PC-3 (cell line): ENCODE measurements at regions of chr7 and their contacts with region 1.

Region 1: GRCh38 chr7:29564496-29565223 is 1.0 kb downstream of the PRR15 start:
- DNase-seq: peak; percentile 92
- ATAC-seq: peak; percentile 57
- H3K4me3 ChIP-seq: peak overlapping the region; percentile 83
- H3K27ac ChIP-seq: peak overlapping the region; percentile 82
- H3K4me1 ChIP-seq: peaks cover 23% of the 10 kb centered on the region
- H3K27me3 ChIP-seq: no peaks in the 10 kb centered on the region
- CTCF ChIP-seq: no peak

Region 2: GRCh38 chr7:29163854-29164253 is 400.8 kb before region 1 on chr7:
- CTCF ChIA-PET with region 1: no interaction called
- POLR2A ChIA-PET with region 1: interaction called, 18 read pairs
- intact Hi-C with region 1: no loop called
- DNase-seq: peak; percentile 32
- ATAC-seq: peak; percentile 98
- H3K4me3 ChIP-seq: no peak overlapping the region
- H3K27ac ChIP-seq: no peak overlapping the region
- H3K4me1 ChIP-seq: no peaks in the 10 kb centered on the region
- H3K27me3 ChIP-seq: no peaks in the 10 kb centered on the region
- CTCF ChIP-seq: no peak

Region 3: GRCh38 chr7:29372351-29373090 is 192.1 kb before region 1 on chr7:
- CTCF ChIA-PET with region 1: no interaction called
- POLR2A ChIA-PET with region 1: interaction called, 10 read pairs
- intact Hi-C with region 1: no loop called
- DNase-seq: peak; percentile 64
- ATAC-seq: peak; percentile 42
- H3K4me3 ChIP-seq: no peak overlapping the region
- H3K27ac ChIP-seq: peak overlapping the region; percentile 88
- H3K4me1 ChIP-seq: peaks cover 49% of the 10 kb centered on the region
- H3K27me3 ChIP-seq: no peaks in the 10 kb centered on the region
- CTCF ChIP-seq: no peak

Region 4: DNA sequence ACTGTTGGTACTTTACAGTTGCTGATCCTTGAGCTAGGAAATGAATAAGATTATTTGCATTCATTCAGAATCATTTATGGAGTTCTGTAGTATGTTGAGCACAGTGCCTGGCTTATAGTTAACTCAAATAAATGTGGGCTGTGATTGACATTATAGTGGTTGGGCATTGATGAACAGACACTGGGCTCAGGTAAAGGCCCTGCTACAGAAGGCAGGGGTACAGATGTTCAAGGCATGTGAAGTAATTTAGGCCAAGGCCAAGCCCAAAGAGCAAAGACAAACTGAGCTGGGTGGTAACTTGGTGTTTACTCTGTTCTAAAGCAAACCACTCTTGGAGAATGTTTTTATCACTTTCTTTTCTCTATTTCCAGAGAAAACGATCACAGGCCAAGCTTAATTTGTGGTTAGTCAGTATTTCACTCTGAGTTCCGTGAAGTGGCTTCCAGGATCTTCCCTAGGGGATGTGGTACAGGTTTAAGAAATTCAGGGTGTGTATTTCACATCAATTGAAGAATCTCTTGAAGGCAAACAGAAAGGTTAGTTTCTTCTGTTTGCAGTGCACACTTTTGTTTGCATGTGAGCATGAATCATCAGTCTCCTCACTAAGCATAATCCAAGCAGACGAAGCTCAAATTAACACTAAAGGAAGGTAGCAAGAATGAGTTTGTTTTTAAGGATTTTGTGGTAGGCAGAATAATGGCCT is 114.9 kb before region 1 on chr7:
- CTCF ChIA-PET with region 1: no interaction called
- POLR2A ChIA-PET with region 1: no interaction called
- intact Hi-C with region 1: loop called (anchors 1 kb)
- DNase-seq: peak; percentile 81
- ATAC-seq: peak; percentile 95
- H3K4me3 ChIP-seq: no peak overlapping the region; the same call in 1 of the 2 replicates
- H3K27ac ChIP-seq: peak overlapping the region; percentile 71
- H3K4me1 ChIP-seq: peaks cover 32% of the 10 kb centered on the region
- H3K27me3 ChIP-seq: no peaks in the 10 kb centered on the region
- CTCF ChIP-seq: no peak

Region 5: DNA sequence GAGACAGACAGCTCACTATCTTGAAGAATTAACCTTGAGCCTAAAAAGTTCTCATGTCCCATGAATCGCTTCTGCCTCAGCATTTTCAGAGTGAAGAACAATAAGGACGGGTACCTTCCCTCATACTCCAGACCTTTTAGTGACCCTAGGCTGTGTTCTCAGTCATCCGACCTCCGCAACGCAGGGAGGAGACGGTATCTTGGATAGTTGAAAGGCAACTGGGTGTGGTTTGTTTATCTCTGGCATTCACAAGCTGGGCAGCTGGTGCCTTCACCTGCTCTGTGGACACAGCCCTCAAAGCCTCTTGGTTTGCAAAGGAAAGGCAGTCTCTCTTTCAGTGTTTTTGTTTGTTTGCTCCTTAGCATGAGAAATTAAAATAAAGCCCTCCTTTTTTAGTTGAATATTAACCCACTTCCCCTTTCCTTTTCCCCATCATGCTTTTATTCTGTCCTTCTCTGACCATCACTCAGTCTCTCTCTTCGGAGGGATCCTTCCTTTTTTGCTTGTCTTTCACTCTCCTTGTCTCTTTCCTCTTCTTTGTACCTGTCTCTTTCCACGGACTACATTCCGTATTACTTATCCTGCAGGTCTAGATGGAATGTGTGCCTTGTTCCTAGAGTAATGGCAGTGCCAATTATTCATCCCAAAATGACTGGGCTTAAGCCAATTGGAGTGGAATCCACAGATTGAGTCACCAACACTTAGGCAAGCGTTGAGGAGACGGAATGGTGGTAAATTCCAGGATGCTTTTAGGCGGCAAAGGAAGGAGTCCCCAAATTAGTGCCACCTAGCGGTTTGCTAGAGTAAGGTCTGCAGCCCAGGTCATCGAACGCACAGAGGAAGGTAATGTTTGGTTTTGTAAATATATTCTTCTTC is 44.7 kb after region 1 on chr7:
- CTCF ChIA-PET with region 1: interaction called, 3 read pairs
- POLR2A ChIA-PET with region 1: interaction called, 3 read pairs
- intact Hi-C with region 1: loop called (anchors 1 kb)
- DNase-seq: peak; percentile 88
- ATAC-seq: peak; percentile 8
- H3K4me3 ChIP-seq: peak overlapping the region; percentile 29; the same call in 1 of the 2 replicates
- H3K27ac ChIP-seq: peak overlapping the region; percentile 94
- H3K4me1 ChIP-seq: peaks cover 75% of the 10 kb centered on the region
- H3K27me3 ChIP-seq: no peaks in the 10 kb centered on the region
- CTCF ChIP-seq: peak; percentile 87

Region 6: DNA sequence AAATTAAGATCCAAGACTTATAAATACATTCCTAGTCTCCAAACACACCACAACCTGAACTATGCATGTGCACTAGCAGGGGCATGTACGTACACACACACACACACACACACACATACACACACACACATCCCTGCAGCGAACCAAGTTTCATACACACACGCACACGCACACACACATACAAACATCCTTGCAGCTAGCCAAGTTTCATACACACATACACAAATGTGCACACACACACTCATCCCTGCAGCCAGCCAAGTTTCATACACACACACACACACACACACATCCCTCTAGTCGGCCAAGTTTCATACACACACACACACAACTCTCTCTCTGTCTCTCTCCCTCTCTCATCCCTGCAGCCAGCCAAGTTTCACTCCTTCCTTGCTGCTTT is 158.9 kb after region 1 on chr7:
- CTCF ChIA-PET with region 1: no interaction called
- POLR2A ChIA-PET with region 1: no interaction called
- intact Hi-C with region 1: loop called (anchors 10 kb)
- DNase-seq: peak; percentile 13
- ATAC-seq: peak; percentile 48
- H3K4me3 ChIP-seq: peak overlapping the region; percentile 44
- H3K27ac ChIP-seq: peak overlapping the region; percentile 57
- H3K4me1 ChIP-seq: peaks cover 21% of the 10 kb centered on the region
- H3K27me3 ChIP-seq: no peaks in the 10 kb centered on the region
- CTCF ChIP-seq: no peak